ENCODE measurements at regions of chr4 and their contacts with region 1.

Region 1: DNA sequence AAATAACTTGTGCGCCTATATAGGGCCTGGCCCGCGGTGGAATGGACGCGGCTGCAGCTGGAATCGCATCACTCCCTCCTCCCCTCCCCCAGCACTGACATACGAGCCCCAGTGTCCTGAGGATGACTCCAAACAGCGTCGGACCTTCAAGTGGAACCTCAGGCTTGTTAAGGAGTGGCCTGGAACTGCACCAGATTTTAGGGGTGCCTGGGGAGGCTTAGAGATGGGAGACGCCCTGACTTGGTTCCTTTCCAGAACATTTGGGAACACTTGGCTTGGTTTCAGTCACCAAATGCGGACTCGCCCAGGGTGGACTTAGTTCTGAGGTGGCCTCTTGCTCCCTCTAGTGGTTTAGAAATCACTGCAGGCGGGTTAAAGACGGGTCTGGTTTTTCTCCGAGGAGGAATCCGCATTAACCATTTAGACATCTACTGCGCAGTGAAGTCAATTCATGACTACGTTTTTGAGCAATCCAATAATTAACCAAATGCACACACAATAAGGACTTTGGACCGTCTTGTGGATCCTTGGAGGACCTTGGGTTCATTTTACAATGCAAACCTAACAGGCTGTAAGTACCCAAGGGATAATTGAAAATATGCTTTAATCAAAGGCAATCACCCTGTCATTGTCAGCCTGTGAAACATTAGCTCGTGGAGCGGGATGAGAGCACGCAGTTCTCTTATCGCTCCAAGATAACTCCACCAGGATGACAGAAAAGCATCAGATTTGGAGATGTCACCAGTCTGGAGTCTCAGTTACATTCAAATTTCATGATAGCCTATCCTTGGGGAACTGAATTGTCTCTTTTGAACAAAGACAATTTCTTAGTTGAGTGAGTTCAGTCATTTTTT is 11.2 kb upstream of the PDGFRA start:
- DNase-seq: peak; percentile 76 to 88
- ATAC-seq: peak; percentile 86 to 96 (median 94)
- H3K4me3 ChIP-seq: peak overlapping the region; percentile 61
- H3K27ac ChIP-seq: no peak overlapping the region
- H3K4me1 ChIP-seq: no peaks in the 10 kb centered on the region
- H3K27me3 ChIP-seq: peaks cover 0 to 9% (median 0%) of the 10 kb centered on the region in 3 donors
- CTCF ChIP-seq: peak; percentile 90

Region 2: DNA sequence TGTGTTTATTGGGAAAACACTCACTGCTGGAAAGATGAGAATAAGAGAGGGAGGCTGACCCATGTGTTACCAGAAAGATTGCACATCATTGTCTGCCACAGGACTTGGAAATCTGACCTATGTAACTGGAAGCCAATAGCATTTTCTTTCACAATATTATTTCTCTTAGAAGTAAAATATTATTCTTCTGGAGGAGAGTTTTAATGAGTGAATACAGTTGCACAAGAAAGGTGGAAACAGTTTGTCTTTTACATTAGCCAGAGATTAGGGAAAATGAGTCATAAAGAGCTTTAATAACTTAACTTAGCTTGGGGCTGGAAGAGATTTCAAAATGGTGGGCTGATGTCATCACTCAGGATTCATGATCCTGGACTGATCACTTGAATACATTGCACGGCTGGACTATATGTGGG is 595.1 kb before region 1 on chr4:
- intact Hi-C with region 1: no loop called
- DNase-seq: no peak
- ATAC-seq: peak in 1 of 4 donors; percentile 44
- H3K4me3 ChIP-seq: no peak overlapping the region
- H3K27ac ChIP-seq: no peak overlapping the region
- H3K4me1 ChIP-seq: no peaks in the 10 kb centered on the region
- H3K27me3 ChIP-seq: no peaks in the 10 kb centered on the region
- CTCF ChIP-seq: no peak

Region 3: DNA sequence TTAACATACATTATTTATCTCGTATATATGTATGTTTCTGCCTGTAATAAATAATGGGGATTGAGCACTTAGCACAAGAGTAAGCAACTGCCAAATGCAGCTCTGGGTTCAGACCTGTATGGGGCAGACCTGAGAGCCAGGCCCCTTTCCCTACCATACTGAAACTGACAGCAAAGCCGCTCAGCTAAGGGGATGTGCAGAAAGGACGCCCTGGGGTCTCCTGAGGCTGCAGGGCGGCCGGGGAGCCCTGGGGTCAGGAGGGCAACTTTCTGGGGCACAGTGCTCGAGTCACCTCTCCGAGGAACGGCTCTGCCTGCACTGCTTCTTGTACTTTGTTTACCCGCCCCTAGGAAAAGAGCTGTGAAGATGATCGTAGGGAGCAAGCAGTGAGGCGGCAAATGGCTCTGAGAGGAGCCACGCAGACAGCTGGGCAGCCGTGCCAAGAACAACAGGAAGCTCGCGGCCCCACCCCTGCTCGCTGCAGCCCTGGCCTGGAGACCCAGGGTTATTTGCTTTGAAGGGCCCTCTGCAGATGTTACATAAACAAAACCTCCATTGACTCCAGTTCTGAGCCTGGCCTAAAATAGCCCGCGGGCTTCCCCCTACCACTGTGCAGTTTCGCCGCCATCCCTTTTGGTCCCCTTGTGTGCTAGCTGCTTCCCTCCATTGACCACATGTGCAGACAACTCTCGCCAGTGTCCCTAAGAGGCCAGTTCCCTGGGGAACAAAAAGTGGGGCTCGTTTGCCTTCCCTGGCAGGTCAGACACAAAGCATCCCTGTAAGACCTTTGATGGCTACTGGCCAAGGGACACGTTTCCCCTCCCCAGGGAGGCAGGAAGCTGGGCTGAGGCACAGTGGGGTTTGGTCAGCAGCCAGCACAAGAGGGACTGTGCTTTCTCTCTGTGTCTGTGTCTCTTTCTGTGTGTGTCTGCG is 515.3 kb before region 1 on chr4:
- intact Hi-C with region 1: loop called in 1 of 2 experiments (anchors 5 kb)
- DNase-seq: peak; percentile 81 to 89
- ATAC-seq: peak; percentile 63 to 91 (median 79)
- H3K4me3 ChIP-seq: peak overlapping the region; percentile 51
- H3K27ac ChIP-seq: peak overlapping the region; percentile 18
- H3K4me1 ChIP-seq: peaks cover 10% of the 10 kb centered on the region
- H3K27me3 ChIP-seq: no peaks in the 10 kb centered on the region
- CTCF ChIP-seq: peak; percentile 3

Region 4: GRCh38 chr4:53929955-53930798 is 287.7 kb before region 1 on chr4:
- intact Hi-C with region 1: loop called (anchors 5 kb)
- DNase-seq: peak; percentile 58 to 66
- ATAC-seq: peak; percentile 77 to 97 (median 90)
- H3K4me3 ChIP-seq: no peak overlapping the region
- H3K27ac ChIP-seq: no peak overlapping the region
- H3K4me1 ChIP-seq: no peaks in the 10 kb centered on the region
- H3K27me3 ChIP-seq: no peaks in the 10 kb centered on the region
- CTCF ChIP-seq: peak; percentile 74

Measured in psoas muscle (tissue), 8 donors.